Sciatic nerve (tissue), 2 donors: ENCODE measurements at regions of chr18 and their contacts with region 1.

Region 1: GRCh38 chr18:73552171-73552570 is 595.5 kb downstream of the FBXO15 start:
- DNase-seq: no peak
- ATAC-seq: no peak

Region 2: DNA sequence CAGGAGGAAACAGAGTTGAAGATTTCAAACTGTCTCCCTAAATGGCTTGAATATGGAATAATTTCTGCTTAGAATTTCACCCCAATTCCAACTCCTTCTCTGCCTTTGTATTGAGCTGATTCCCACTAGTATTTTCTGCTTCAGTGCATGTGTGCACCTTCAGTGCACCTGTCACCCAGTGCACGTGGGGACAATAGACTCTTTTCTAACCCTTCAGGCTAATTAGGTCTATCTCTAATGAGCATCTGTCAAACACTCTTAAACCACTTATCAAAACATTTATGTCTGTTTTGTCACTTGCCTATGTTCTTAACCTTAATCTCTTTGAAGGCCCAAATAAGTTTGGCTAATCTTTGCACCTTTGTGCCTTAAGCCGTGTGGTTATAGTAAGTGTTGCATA is 452.4 kb before region 1 on chr18:
- intact Hi-C with region 1: no loop called
- DNase-seq: no peak
- ATAC-seq: no peak

Region 3: GRCh38 chr18:73590950-73591349 is 38.8 kb after region 1 on chr18:
- intact Hi-C with region 1: loop called (anchors 2 kb)
- DNase-seq: no peak
- ATAC-seq: no peak

Region 4: GRCh38 chr18:74976331-74976909 is 1424.2 kb after region 1 on chr18:
- intact Hi-C with region 1: no loop called
- DNase-seq: no peak
- ATAC-seq: no peak